A549 (cell line): ENCODE measurements at regions of chr5 and their contacts with region 1.

Region 1: DNA sequence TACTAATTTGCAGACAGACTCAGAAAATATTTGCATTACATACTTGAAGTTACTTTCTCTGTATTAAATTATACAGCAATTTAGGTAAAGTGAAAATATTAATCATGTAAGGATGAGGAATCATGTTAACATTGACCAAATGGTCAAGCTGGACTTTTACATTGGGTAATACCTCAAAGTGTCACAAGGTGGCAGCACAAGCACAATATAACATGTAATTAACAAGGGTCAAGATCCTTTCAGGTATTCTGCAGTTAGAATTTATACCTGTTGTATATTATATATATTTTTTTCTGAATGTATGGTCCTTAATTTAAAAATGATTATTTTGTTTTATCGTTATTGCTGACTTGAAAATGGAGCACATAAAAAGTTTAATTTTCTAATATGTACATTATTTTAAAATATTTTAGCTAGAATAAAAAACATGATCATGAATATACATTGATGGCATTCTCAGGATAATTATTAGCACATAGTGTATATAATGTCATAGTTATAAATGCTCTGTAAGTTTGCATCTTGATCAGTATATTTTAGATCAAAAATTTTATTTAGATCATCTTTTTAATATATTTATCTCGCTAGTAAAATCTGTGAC is 8.6 kb downstream of the HAPLN1 start:
- DNase-seq: peak; percentile 23 to 59
- ATAC-seq: peak in 1 of 2 experiments; percentile 70; a peak in 3 of 6 replicates
- H3K4me3 ChIP-seq: no peak overlapping the region
- H3K27ac ChIP-seq: no peak overlapping the region
- H3K4me1 ChIP-seq: no peaks in the 10 kb centered on the region
- CTCF ChIP-seq: peak; percentile 70
- EP300 ChIP-seq: no peak
- POLR2A ChIP-seq: no peak
- RAD21 ChIP-seq: peak; percentile 62 to 65

Region 2: GRCh38 chr5:83688281-83688680 is 23.8 kb before region 1 on chr5:
- CTCF ChIA-PET with region 1: no interaction called
- POLR2A ChIA-PET with region 1: no interaction called
- DNase-seq: no peak
- ATAC-seq: no peak
- H3K4me3 ChIP-seq: no peak overlapping the region
- H3K27ac ChIP-seq: no peak overlapping the region
- H3K4me1 ChIP-seq: no peaks in the 10 kb centered on the region
- CTCF ChIP-seq: no peak
- EP300 ChIP-seq: no peak
- POLR2A ChIP-seq: no peak
- RAD21 ChIP-seq: no peak

Region 3: GRCh38 chr5:83701886-83702285 is 10.2 kb before region 1 on chr5:
- CTCF ChIA-PET with region 1: interaction called, 15 read pairs
- POLR2A ChIA-PET with region 1: no interaction called
- DNase-seq: no peak
- ATAC-seq: no peak
- H3K4me3 ChIP-seq: no peak overlapping the region
- H3K27ac ChIP-seq: no peak overlapping the region
- H3K4me1 ChIP-seq: no peaks in the 10 kb centered on the region
- CTCF ChIP-seq: no peak
- EP300 ChIP-seq: no peak
- POLR2A ChIP-seq: no peak
- RAD21 ChIP-seq: no peak

Region 4: DNA sequence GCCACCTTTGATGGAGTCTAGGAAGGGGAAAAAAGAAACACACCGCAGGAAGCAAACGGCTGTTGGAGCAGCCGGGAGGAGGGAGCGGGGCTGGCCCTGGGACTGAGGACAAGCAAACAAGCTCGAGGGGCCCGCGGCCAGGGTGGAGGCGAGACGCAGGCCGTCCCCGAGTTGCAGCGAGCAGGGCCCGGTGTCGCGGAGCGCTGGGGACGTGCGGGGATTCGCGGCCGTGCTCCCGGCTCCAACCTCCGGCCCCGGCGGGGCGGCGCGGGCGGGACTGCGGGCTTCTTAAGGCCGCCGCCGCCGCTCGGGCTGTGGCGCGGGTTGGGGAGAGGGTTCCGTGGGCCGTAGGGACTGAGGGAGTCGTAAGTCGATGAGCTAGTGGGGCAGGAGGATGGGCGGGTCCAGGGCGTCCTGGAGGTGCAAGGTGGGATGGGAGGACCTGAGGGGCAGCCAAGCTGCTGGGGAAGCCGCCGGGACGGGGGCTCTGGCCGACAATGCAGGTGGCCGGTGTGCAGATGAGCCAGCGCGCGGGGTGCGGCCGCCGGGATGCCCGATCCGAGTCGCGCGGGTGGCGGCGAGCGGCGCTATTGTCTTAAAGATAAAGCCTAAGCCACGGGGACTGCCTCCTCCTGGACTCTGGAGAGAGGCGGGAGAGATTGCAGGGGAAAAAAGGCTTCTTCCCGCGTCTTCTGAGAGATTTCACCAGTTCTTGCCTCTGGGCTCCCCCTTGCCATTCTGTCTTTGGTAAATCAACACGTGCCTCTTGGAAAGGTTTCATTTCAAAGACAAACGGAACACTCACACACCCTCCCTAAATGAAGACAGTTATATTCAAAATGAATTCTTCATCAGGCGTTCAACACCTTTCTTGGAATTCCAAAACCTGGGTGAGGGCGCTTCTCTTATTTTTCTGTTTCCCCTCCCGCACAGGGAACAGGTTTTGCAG is 10.1 kb after region 1 on chr5:
- CTCF ChIA-PET with region 1: interaction called, 19 read pairs
- POLR2A ChIA-PET with region 1: no interaction called
- DNase-seq: peak; percentile 64 to 67
- ATAC-seq: peak; percentile 94 to 96
- H3K4me3 ChIP-seq: peak overlapping the region; percentile 51
- H3K27ac ChIP-seq: peak overlapping the region; percentile 36 to 76; a peak in 4 of 6 replicates
- H3K4me1 ChIP-seq: 0 out of 3 replicates have a peak, but pooled peaks cover 4% of the 10 kb centered on the region
- CTCF ChIP-seq: peak; percentile 54
- EP300 ChIP-seq: no peak
- POLR2A ChIP-seq: no peak
- RAD21 ChIP-seq: peak; percentile 70 to 86